Dorsolateral prefrontal cortex (tissue), 120 donors: ENCODE measurements at regions of chr6 and their contacts with region 1.

Region 1: DNA sequence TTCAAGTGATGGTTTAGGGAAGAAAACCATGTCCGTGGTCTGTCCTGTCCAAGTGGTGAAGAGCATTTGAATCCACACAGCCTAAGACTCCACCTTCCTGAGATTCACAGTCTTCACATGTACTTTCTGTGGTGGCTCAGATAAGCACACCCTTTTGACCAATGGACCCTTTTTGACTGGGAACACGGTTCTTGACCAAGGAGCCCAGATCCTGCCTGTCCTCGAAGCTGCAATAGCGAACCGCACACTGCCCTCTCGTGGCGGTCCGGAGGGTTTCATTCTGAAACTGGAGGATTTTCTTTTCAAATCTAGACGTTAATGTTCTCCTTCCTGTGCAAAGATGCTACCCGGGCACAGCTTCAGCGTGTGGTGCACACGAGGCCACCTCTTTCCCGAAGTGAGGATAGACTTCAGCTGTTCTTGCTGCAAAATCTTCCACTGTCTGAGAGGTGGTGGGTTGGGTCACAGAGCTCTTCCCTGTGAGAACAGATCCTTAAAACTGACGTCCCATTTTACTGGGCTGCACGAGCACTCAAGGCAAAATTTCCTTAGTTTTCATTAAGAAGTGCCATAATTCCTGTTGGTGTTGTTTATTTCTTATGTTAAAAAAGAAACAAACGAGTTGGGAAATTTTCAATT is 90.5 kb downstream of the SYNJ2 start:
- DNase-seq: peak; percentile 70 to 91 (median 78)
- H3K4me3 ChIP-seq: peak overlapping the region in 1 of 59 donors; percentile 16
- H3K27ac ChIP-seq: peak overlapping the region in 58 of 59 donors; percentile 2 to 90 (median 80)
- H3K27me3 ChIP-seq: no peaks in the 10 kb centered on the region
- CTCF ChIP-seq: peak; percentile 69 to 97 (median 90)

Region 2: GRCh38 chr6:157981395-157982296 is 90.6 kb before region 1 on chr6 and contains the start of gene SYNJ2:
- intact Hi-C with region 1: loop called (anchors 2 to 5 kb)
- DNase-seq: peak in 8 of 10 donors; percentile 56 to 85 (median 69)
- H3K4me3 ChIP-seq: peak within 1 kb of the TSS; percentile 68 to 99 (median 85)
- H3K27ac ChIP-seq: peak within 1 kb of the TSS; percentile 68 to 100 (median 92)
- H3K27me3 ChIP-seq: no peaks in the 10 kb centered on the region
- CTCF ChIP-seq: peak in 54 of 56 donors; percentile 17 to 79 (median 53)
- total RNA-seq, gene SYNJ2: 41.0 to 257 (median 86.5) TPM

Region 3: DNA sequence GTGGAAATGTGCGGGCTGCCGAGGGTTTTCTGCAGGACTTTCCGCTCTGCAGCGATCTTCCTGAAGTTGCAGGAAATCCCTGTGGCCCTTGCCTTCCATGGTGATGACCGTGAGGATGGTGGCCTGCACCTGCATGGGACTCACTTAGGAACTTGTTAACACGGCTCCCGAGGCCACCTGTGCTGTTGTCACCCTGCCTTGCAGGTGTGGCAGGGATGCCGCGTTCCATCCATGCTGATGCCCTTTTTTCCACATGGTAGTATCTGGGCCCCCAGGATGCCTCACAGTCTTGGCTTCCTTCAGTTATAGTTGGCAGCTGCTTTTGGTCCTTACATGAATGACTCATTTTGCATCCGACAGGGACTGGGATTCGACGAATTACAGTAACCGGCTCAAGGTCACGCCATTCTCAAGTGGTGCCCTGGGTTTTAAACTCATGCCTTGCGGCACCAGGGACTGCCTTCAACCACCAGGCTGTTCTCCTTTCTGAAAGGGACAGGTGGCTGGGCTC is 53.3 kb before region 1 on chr6:
- intact Hi-C with region 1: loop called in 1 of 2 experiments (anchors 5 kb)
- DNase-seq: peak in 3 of 10 donors; percentile 39 to 44 (median 41)
- H3K4me3 ChIP-seq: peak overlapping the region in 56 of 59 donors; percentile 10 to 73 (median 52)
- H3K27ac ChIP-seq: peak overlapping the region in 58 of 59 donors; percentile 58 to 100 (median 98)
- H3K27me3 ChIP-seq: no peaks in the 10 kb centered on the region
- CTCF ChIP-seq: no peak

Region 4: GRCh38 chr6:158039571-158040050 is 32.6 kb before region 1 on chr6:
- intact Hi-C with region 1: loop called in 1 of 2 experiments (anchors 5 kb)
- DNase-seq: peak in 6 of 10 donors; percentile 57 to 79 (median 65)
- H3K4me3 ChIP-seq: peak overlapping the region in 7 of 59 donors; percentile 3 to 22 (median 6)
- H3K27ac ChIP-seq: peak overlapping the region; percentile 44 to 100 (median 88)
- H3K27me3 ChIP-seq: no peaks in the 10 kb centered on the region
- CTCF ChIP-seq: no peak